Pancreas (tissue), 10 donors: ENCODE measurements at regions of chr11 and their contacts with region 1.

Region 1: DNA sequence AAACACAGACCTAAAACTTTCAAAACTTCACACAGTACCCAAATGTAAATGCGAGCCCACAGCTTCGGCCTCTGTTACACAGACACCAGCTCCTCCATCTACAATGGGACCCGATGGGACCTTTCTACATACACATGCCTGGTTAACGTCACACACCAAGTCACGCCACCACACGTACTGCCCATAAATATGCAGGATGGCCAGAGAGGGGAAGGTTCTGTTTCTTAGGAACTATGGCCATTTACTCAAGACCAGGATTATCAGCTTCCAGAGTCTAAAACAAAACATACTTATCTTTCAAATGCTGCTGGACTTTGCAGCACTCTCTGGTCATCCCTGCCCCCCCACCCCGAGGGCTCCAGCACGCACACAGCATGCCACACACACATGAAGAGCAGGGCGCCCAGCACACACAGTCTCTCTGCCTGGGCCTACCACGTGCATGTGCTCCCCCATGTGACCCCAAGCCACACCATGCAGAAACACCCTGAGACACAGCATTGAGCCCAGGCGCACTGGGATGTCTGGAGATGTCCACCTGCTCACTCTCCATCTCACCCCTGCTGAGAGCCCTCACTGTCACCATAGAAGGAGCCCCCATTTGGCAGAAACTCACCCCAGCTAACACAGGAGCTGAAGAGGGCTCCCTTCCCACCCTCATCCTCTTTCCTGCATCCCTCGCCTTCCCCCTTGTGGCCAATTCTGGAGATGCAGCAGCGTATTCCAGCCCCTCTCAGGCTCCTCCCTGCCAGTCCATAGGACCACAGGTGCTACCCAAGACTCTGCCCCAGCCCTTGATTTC is 61.8 kb downstream of the SLC22A12 start:
- DNase-seq: peak; percentile 66 to 95 (median 84)
- ATAC-seq: peak; percentile 65 to 84 (median 84)
- H3K4me3 ChIP-seq: no peak overlapping the region
- H3K27ac ChIP-seq: no peak overlapping the region
- H3K4me1 ChIP-seq: peaks cover 0 to 6% (median 0%) of the 10 kb centered on the region in 3 donors
- H3K27me3 ChIP-seq: no peaks in the 10 kb centered on the region
- CTCF ChIP-seq: peak; percentile 76 to 93 (median 86)

Region 2: GRCh38 chr11:64489831-64490441 is 162.9 kb before region 1 on chr11:
- intact Hi-C with region 1: loop called in 1 of 3 experiments (anchors 10 kb)
- DNase-seq: peak in 5 of 6 donors; percentile 27 to 86 (median 50)
- ATAC-seq: peak; percentile 72 to 99 (median 90)
- H3K4me3 ChIP-seq: no peak overlapping the region
- H3K27ac ChIP-seq: no peak overlapping the region
- H3K4me1 ChIP-seq: no peaks in the 10 kb centered on the region
- H3K27me3 ChIP-seq: peaks cover 0 to 6% (median 3%) of the 10 kb centered on the region in 4 donors
- CTCF ChIP-seq: peak; percentile 44 to 65 (median 52)

Region 3: DNA sequence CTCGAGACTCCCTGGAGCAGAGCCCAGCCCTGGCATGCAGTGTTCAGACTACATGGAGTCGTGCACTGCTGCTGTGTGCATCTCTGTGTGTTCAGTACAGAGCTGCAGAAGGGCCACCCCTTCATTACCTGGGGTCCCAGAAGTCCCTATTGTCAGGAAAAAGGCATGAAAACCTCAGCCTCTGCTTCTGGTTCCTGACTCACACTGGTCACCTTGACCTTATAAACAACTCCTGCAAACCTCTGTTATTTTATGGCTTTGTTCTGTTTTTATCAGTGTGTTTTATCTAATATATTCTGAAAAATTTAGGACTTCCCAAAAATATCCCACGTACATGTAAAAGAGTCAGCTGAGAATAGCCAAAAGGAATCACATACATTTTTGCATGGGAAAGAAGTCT is 146.1 kb before region 1 on chr11:
- intact Hi-C with region 1: no loop called
- DNase-seq: no peak
- ATAC-seq: no peak
- H3K4me3 ChIP-seq: no peak overlapping the region
- H3K27ac ChIP-seq: no peak overlapping the region
- H3K4me1 ChIP-seq: no peaks in the 10 kb centered on the region
- H3K27me3 ChIP-seq: no peaks in the 10 kb centered on the region
- CTCF ChIP-seq: no peak

Region 4: GRCh38 chr11:64553551-64554201 is 99.1 kb before region 1 on chr11:
- intact Hi-C with region 1: loop called in 1 of 3 experiments (anchors 5 kb)
- DNase-seq: peak in 5 of 6 donors; percentile 42 to 91 (median 71)
- ATAC-seq: peak; percentile 78 to 86 (median 80)
- H3K4me3 ChIP-seq: no peak overlapping the region
- H3K27ac ChIP-seq: peak overlapping the region in 3 of 4 donors; percentile 26 to 73 (median 65)
- H3K4me1 ChIP-seq: peaks cover 7 to 22% (median 8%) of the 10 kb centered on the region in 3 donors
- H3K27me3 ChIP-seq: no peaks in the 10 kb centered on the region
- CTCF ChIP-seq: peak; percentile 88 to 98 (median 98)